Sigmoid colon (tissue), 7 donors: ENCODE measurements at regions of chr3 and their contacts with region 1.

Region 1: GRCh38 chr3:71583566-71584449 is at the start of gene FOXP1:
- DNase-seq: peak; percentile 85
- H3K4me3 ChIP-seq: peak within 1 kb of the TSS; percentile 76 to 96 (median 86)
- H3K27ac ChIP-seq: peak within 1 kb of the TSS; percentile 96 to 99 (median 98)
- H3K4me1 ChIP-seq: peaks cover 0 to 46% (median 31%) of the 10 kb centered on the region in 4 donors
- H3K27me3 ChIP-seq: no peaks in the 10 kb centered on the region
- CTCF ChIP-seq: no peak
- EP300 ChIP-seq: no peak
- POLR2A ChIP-seq: peak; percentile 11 to 24
- total RNA-seq, gene FOXP1: 139 to 232 (median 169) TPM

Region 2: GRCh38 chr3:70531063-70531657 is 1052.6 kb before region 1 on chr3:
- intact Hi-C with region 1: loop called (anchors 5 kb)
- DNase-seq: no peak
- H3K4me3 ChIP-seq: no peak overlapping the region
- H3K27ac ChIP-seq: no peak overlapping the region
- H3K4me1 ChIP-seq: peaks cover 0 to 20% (median 7%) of the 10 kb centered on the region in 4 donors
- H3K27me3 ChIP-seq: no peaks in the 10 kb centered on the region
- CTCF ChIP-seq: peak; percentile 16 to 51 (median 40)
- EP300 ChIP-seq: no peak
- POLR2A ChIP-seq: no peak

Region 3: GRCh38 chr3:70716832-70717231 is 867.0 kb before region 1 on chr3:
- intact Hi-C with region 1: loop called (anchors 5 kb)
- DNase-seq: peak; percentile 72
- H3K4me3 ChIP-seq: no peak overlapping the region
- H3K27ac ChIP-seq: no peak overlapping the region
- H3K4me1 ChIP-seq: peaks cover 0 to 7% (median 2%) of the 10 kb centered on the region in 4 donors
- H3K27me3 ChIP-seq: no peaks in the 10 kb centered on the region
- CTCF ChIP-seq: peak in 3 of 4 experiments; percentile 22 to 40 (median 23)
- EP300 ChIP-seq: peak in 1 of 4 donors; percentile 58
- POLR2A ChIP-seq: no peak

Region 4: DNA sequence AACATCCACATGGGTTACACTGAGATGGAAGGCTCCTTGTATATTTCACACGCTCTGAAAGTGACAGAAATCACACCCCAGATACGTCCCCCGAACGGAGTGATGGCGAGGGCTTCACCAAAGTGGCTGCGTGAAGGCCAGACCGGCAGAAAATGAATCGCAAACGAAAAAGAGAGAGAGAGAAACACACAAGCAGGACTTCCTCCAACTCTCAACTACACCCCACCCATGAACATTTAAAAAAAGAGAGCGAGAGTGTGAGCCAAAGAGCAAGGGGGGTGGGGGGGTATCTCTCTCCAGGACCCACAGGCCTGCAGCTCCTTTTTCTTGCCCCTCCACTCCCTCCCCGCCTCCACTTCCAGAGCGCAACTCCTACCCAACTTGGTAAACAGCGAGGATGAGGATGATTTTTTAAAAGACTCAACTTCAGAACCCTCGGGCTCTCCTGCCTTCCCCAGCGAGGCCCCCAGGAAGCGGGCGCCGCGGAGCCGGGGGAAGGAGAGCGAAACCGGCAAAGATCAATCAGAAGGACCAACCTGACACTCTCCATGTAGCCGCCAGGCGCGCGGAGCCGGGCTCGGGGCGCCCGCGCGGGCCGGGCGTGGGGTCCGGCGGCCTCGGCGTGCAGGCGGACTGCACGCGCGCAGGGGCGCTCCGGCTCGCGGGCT is 519.4 kb before region 1 on chr3:
- intact Hi-C with region 1: loop called (anchors 5 kb)
- DNase-seq: peak; percentile 74
- H3K4me3 ChIP-seq: peak overlapping the region; percentile 71 to 81 (median 72)
- H3K27ac ChIP-seq: peak overlapping the region; percentile 92 to 99 (median 98)
- H3K4me1 ChIP-seq: peaks cover 0 to 67% (median 60%) of the 10 kb centered on the region in 4 donors
- H3K27me3 ChIP-seq: no peaks in the 10 kb centered on the region
- CTCF ChIP-seq: no peak
- EP300 ChIP-seq: no peak
- POLR2A ChIP-seq: no peak

Region 5: DNA sequence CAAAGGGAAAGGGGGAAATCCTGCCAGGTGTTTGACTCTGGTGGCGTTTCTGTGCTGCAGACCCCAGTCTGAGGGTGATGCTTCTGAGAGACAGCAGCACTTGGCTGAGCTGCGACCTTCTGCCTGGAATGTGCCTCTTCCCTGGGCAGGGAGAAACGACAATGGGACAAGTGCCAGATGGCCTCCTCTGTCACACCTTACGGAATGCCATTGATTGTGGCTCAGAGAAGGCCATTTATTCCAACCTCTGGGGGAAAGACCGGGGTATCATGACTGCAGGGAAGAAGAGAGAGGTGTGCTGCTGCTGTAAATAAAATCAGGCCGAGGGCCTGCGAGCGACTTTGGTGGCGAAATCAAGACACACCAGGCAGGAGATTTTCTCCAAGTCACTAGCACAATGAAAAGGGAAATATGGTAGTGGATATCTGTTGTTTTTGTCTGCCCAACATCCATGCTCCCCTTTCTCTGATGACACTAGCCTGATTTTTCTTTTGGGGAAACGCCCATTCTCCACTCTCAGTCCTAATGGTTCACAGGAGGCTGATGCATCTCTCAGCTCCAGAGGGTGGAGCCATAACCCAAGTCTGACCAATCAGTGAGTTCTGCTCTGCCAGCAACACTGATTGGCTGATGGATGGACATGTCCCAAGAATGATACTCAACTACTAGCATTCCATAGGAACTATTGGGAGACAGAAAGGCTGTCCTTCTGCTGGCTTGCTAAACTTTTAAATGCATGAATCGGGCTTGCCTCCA is 336.4 kb before region 1 on chr3:
- intact Hi-C with region 1: loop called (anchors 5 kb)
- DNase-seq: no peak
- H3K4me3 ChIP-seq: no peak overlapping the region
- H3K27ac ChIP-seq: peak overlapping the region; percentile 79 to 89 (median 85)
- H3K4me1 ChIP-seq: peaks cover 0 to 41% (median 20%) of the 10 kb centered on the region in 4 donors
- H3K27me3 ChIP-seq: no peaks in the 10 kb centered on the region
- CTCF ChIP-seq: no peak
- EP300 ChIP-seq: no peak
- POLR2A ChIP-seq: no peak

Region 6: DNA sequence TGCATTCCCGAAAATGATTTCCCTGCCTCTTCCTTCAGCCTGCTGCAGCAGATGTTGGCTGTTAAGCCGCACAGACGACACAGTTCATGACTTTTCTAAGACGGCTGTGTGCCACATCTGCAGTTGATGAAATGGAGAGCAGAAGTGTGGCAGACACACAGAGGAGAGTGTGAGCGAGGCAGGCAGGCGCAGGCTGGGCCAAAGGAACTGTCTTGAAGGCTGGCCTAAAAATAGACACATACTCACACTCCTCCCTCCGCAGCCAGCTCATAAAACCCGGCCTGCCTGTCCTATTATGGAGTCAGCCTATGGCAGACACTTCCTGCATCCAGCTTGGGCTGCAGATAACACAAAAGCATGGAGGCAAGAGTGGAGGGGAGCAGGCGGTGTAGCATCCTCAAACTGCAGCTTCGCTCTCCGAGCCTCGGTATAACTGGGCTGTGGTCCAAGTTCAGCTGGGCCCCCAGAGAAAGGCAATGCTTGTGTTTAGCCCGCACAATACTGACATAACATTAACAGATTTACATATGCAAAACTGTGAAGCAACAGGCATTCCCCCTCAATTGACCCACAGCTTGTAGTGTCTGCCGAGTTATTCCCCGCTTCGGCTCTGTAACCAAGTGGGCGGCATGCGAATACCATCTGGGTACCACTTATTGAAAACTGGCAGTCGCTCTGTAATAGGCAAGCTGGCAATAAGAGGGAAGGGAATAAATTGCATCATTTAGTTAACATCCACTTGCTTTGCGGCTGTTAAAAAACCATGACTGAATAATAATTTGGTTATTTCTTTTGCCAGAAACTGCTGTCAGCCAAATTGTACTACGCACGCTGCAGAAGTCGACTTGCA is 41.1 kb before region 1 on chr3:
- intact Hi-C with region 1: loop called (anchors 5 kb)
- DNase-seq: peak; percentile 96
- H3K4me3 ChIP-seq: peak overlapping the region in 3 of 4 donors; percentile 27 to 40 (median 30)
- H3K27ac ChIP-seq: peak overlapping the region; percentile 78 to 92 (median 80)
- H3K4me1 ChIP-seq: peaks cover 0 to 43% (median 32%) of the 10 kb centered on the region in 4 donors
- H3K27me3 ChIP-seq: no peaks in the 10 kb centered on the region
- CTCF ChIP-seq: no peak
- EP300 ChIP-seq: peak in 1 of 4 donors; percentile 43
- POLR2A ChIP-seq: peak in 1 of 2 donors; percentile 25

Region 7: GRCh38 chr3:71681224-71681668 is 97.4 kb after region 1 on chr3:
- intact Hi-C with region 1: loop called (anchors 2 kb)
- DNase-seq: peak; percentile 89
- H3K4me3 ChIP-seq: no peak overlapping the region
- H3K27ac ChIP-seq: peak overlapping the region; percentile 56 to 70 (median 67)
- H3K4me1 ChIP-seq: peaks cover 0 to 70% (median 41%) of the 10 kb centered on the region in 4 donors
- H3K27me3 ChIP-seq: no peaks in the 10 kb centered on the region
- CTCF ChIP-seq: peak; percentile 31 to 64 (median 58)
- EP300 ChIP-seq: no peak
- POLR2A ChIP-seq: no peak